Activated CD4-positive, alpha-beta T cell treated with anti-CD3 and anti-CD28 coated beads for 36 hours (primary cell): ENCODE measurements at regions of chr17 and their contacts with region 1.

Region 1: GRCh38 chr17:65122836-65123756 is 14.1 kb upstream of the RGS9 start:
- DNase-seq: peak; percentile 89
- ATAC-seq: peak; percentile 69
- H3K4me3 Mint-ChIP-seq: peak overlapping the region; percentile 70
- H3K27ac Mint-ChIP-seq: peak overlapping the region; percentile 98
- H3K4me1 Mint-ChIP-seq: peaks cover 22% of the 10 kb centered on the region
- H3K27me3 Mint-ChIP-seq: peaks cover 6% of the 10 kb centered on the region

Region 2: GRCh38 chr17:64975329-64976087 is 147.6 kb before region 1 on chr17:
- CTCF ChIA-PET with region 1: no interaction called
- POLR2A ChIA-PET with region 1: no interaction called
- intact Hi-C with region 1: loop called (anchors 1 to 2 kb)
- DNase-seq: peak; percentile 97
- ATAC-seq: peak; percentile 80
- H3K4me3 Mint-ChIP-seq: peak overlapping the region; percentile 81
- H3K27ac Mint-ChIP-seq: peak overlapping the region; percentile 98
- H3K4me1 Mint-ChIP-seq: peaks cover 59% of the 10 kb centered on the region
- H3K27me3 Mint-ChIP-seq: no peaks in the 10 kb centered on the region

Region 3: GRCh38 chr17:65137021-65137991 is 14.2 kb after region 1 on chr17 and contains the start of gene RGS9:
- CTCF ChIA-PET with region 1: interaction called, 9 read pairs
- POLR2A ChIA-PET with region 1: interaction called, 3 read pairs
- intact Hi-C with region 1: loop called (anchors 1 to 2 kb)
- DNase-seq: peak; percentile 89
- ATAC-seq: peak; percentile 95
- H3K4me3 Mint-ChIP-seq: peak within 1 kb of the TSS; percentile 42
- H3K27ac Mint-ChIP-seq: peak within 1 kb of the TSS; percentile 62
- H3K4me1 Mint-ChIP-seq: peaks cover 14% of the 10 kb centered on the region
- H3K27me3 Mint-ChIP-seq: peaks cover 10% of the 10 kb centered on the region
- total RNA-seq, gene RGS9: 1.6 to 1.8 TPM

Region 4: DNA sequence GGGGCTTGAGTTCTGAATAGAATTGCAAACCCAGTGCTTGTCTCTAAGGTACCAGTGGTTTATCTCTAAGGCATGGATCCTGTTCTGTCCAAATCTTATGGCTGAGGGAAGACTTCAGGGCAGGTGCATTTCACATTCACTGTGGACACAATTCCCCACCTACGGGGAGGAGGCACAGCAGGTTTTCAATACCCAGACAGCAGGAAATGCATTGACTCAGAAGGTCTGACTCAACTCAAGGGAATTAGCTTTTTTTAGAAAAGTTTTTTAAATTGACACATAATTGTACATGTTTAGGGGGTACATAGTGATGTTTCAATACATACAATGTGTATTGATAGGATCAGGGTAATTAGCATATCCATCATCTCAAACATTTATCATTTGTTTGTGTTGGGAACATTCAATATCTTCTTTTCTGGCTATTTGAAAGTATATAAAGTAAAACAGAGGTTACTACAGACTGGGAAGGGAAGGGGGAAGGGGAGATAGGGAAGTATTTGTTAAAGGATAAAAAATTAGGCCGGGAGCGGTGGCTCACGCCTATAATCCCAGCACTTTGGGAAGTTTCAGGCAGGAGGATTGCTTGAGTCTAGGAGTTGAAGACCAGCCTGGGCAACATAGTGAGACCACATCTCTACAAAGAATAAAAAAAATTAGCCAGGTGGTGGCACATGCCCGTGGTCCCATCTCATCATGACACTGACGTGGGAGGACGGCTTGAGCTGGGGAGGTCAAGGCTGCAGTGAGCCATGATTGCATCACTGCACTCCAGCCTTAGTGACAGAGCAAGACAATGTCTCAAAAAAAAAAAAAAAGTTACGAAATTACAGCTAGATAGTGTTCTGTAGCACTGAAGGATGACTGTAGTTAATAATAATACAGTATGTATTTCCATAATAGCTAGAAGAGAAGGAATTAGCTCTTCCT is 69.0 kb after region 1 on chr17:
- CTCF ChIA-PET with region 1: no interaction called
- POLR2A ChIA-PET with region 1: no interaction called
- intact Hi-C with region 1: loop called (anchors 2 to 5 kb)
- DNase-seq: peak; percentile 47
- ATAC-seq: peak; percentile 90
- H3K4me3 Mint-ChIP-seq: no peak overlapping the region
- H3K27ac Mint-ChIP-seq: peak overlapping the region; percentile 62
- H3K4me1 Mint-ChIP-seq: peaks cover 36% of the 10 kb centered on the region
- H3K27me3 Mint-ChIP-seq: no peaks in the 10 kb centered on the region